SK-N-SH (cell line): ENCODE measurements at regions of chr15 and their contacts with region 1.

Region 1: DNA sequence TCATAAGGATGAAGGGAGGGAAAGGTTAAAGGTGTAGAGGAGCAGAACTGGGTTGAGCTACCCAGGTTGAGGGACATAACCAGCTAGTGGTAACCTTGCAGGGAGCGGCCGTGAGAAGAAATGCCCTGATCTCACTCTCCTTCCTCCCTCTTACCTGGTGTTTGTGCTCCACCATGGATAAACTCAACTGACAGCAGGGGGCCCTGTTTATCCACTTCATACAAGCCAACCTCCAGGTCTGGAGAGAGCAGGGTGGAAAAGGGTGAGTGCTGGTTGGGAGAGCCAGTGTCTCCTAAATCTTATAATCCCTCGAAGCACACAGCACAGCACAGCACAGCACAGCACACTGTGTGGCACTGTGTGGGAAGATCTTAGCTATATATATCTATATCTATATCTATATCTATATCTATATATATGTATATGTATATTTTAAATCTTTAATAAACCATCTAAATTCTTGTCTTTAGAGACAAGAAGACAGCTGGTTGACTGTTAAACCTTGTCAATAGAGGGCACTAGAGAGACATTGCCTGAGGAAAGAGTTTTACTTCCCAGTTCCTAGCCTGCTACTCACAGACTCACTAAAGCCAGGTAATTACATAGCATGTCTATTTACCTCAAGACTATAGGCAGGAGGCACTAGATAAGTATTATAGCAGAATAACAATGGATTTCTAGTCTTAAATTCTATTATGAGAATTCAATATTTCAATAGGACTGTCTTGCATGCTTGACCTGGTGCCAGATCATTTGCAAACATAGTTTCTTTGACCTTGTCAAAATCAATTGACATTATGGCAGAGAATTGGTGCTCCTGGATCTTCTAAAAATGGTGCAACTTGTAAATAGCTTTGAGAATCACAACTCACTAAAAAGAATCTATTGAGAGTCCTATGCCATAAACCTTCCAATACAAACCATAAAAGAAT is 21.7 kb upstream of the FMN1 start:
- DNase-seq: no peak
- H3K4me3 ChIP-seq: no peak overlapping the region
- H3K27ac ChIP-seq: no peak overlapping the region
- H3K4me1 ChIP-seq: peaks cover 0 to 8% of the 10 kb centered on the region in 2 experiments; a peak in 2 of 4 replicates
- H3K27me3 ChIP-seq: no peaks in the 10 kb centered on the region
- CTCF ChIP-seq: peak; percentile 60
- EP300 ChIP-seq: no peak
- RAD21 ChIP-seq: peak; percentile 11; the same call in 1 of the 2 replicates

Region 2: GRCh38 chr15:33201491-33202231 is 14.5 kb before region 1 on chr15:
- CTCF ChIA-PET with region 1: interaction called, 13 read pairs
- POLR2A ChIA-PET with region 1: interaction called, 4 read pairs
- DNase-seq: peak; percentile 42
- H3K4me3 ChIP-seq: peak overlapping the region; percentile 24 to 52
- H3K27ac ChIP-seq: peak overlapping the region; percentile 55 to 68; a peak in 3 of 4 replicates
- H3K4me1 ChIP-seq: peaks cover 0 to 6% of the 10 kb centered on the region in 2 experiments; a peak in 2 of 4 replicates
- H3K27me3 ChIP-seq: no peaks in the 10 kb centered on the region
- CTCF ChIP-seq: peak; percentile 48
- EP300 ChIP-seq: 0 out of 4 replicates have a peak, but pooled peaks of 1 of the 2 experiments have one; percentile 14
- RAD21 ChIP-seq: peak; percentile 14; the same call in 1 of the 2 replicates

Region 3: GRCh38 chr15:33226559-33227181 is 10.5 kb after region 1 on chr15:
- CTCF ChIA-PET with region 1: interaction called, 16 read pairs
- POLR2A ChIA-PET with region 1: no interaction called
- DNase-seq: peak; percentile 32
- H3K4me3 ChIP-seq: no peak overlapping the region
- H3K27ac ChIP-seq: no peak overlapping the region
- H3K4me1 ChIP-seq: no peaks in the 10 kb centered on the region
- H3K27me3 ChIP-seq: no peaks in the 10 kb centered on the region
- CTCF ChIP-seq: peak; percentile 59
- EP300 ChIP-seq: no peak
- RAD21 ChIP-seq: peak; percentile 33; the same call in 1 of the 2 replicates